Heart right ventricle (tissue), 16 donors: ENCODE measurements at regions of chr5 and their contacts with region 1.

Region 1: GRCh38 chr5:64505769-64506566 is at the start of gene RGS7BP:
- DNase-seq: peak; percentile 23 to 60
- ATAC-seq: peak; percentile 86 to 98 (median 92)
- H3K4me3 ChIP-seq: peak within 1 kb of the TSS; percentile 41 to 67 (median 62)
- H3K27ac ChIP-seq: peak within 1 kb of the TSS in 5 of 10 donors; percentile 5 to 59 (median 48)
- H3K4me1 ChIP-seq: peaks cover 0 to 36% (median 7%) of the 10 kb centered on the region in 9 donors
- H3K27me3 ChIP-seq: peaks cover 0 to 47% (median 29%) of the 10 kb centered on the region in 7 donors
- CTCF ChIP-seq: peak in 3 of 9 donors; percentile 34 to 58 (median 35)
- total RNA-seq, gene RGS7BP: 0.81 to 3.1 (median 1.7) TPM

Region 2: DNA sequence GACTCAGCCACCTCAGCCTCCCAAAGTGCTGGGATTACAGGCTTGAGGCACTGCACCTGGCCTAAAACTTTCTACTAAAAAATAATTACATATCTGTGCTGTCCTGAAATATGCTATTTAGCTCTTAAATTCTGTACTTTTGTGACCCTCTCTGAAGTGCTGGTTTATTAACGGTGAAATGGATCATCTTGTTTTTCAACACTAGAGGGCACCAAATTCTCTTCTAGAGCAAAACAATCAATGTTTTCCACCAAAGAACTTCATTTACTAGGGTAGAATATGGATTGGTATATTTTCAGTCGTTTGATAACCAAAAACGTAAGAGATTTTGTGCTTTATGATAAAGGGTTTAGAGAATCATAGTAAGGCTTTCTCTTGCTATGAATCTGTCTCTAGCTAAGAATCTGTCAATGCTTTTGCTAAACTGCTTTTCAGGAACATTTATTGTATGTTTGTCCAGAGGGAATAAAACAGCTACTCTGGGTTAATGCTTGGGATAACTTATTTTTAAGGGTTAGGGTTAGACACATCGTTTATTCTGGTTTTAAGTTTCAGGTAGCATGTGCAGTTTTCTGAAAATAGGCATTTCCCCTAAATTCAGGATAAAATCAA is 276.7 kb before region 1 on chr5:
- intact Hi-C with region 1: loop called in 1 of 10 experiments (anchors 10 kb)
- DNase-seq: no peak
- ATAC-seq: peak in 1 of 8 donors; percentile 47
- H3K4me3 ChIP-seq: no peak overlapping the region
- H3K27ac ChIP-seq: no peak overlapping the region
- H3K4me1 ChIP-seq: no peaks in the 10 kb centered on the region
- H3K27me3 ChIP-seq: no peaks in the 10 kb centered on the region
- CTCF ChIP-seq: peak; percentile 49 to 79 (median 69)

Region 3: GRCh38 chr5:64587370-64587769 is 81.4 kb after region 1 on chr5:
- intact Hi-C with region 1: loop called in 4 of 10 experiments (anchors 5 to 10 kb)
- DNase-seq: no peak
- ATAC-seq: peak in 6 of 8 donors; percentile 42 to 80 (median 73)
- H3K4me3 ChIP-seq: no peak overlapping the region
- H3K27ac ChIP-seq: peak overlapping the region in 1 of 10 donors; percentile 33
- H3K4me1 ChIP-seq: peaks cover 0 to 33% (median 5%) of the 10 kb centered on the region in 9 donors
- H3K27me3 ChIP-seq: no peaks in the 10 kb centered on the region
- CTCF ChIP-seq: no peak

Region 4: GRCh38 chr5:64595031-64595855 is 89.3 kb after region 1 on chr5:
- intact Hi-C with region 1: loop called in 2 of 10 experiments (anchors 10 kb)
- DNase-seq: no peak
- ATAC-seq: peak in 5 of 8 donors; percentile 23 to 77 (median 44)
- H3K4me3 ChIP-seq: no peak overlapping the region
- H3K27ac ChIP-seq: no peak overlapping the region
- H3K4me1 ChIP-seq: peaks cover 0 to 14% (median 5%) of the 10 kb centered on the region in 9 donors
- H3K27me3 ChIP-seq: no peaks in the 10 kb centered on the region
- CTCF ChIP-seq: peak in 8 of 9 donors; percentile 8 to 58 (median 36)